SK-N-SH (cell line): ENCODE measurements at regions of chr1 and their contacts with region 1.

Region 1: DNA sequence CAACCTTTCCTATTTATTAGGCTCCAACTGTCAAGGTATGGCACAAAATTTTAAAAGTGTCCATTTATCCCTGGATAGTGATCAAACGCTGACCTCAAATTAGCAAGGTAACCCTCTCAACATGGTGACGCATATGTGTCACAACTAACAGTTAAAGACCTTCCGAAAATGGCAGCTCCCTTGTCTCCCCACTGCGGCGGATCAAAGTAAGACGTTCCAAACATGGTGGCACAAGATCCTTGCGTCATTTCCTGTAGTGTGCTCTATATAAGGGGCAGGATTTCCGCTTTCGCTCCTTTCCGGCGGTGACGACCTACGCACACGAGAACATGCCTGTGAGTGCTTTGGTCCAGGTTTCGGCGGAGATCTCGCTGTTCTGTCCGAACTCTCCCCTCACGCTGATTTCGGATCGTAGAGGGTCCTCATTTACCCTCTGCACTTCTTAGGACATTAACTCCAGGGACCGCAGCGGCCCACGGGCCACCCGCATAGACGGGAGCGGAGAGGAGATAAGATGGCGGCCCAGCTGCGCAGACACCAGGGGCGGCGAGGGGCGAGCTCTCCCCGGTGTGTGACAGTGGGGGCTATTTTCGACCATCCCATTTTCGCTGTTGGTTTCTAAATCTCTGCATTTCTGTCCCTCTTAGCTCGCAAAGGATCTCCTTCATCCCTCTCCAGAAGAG is at the start of gene RPS27:
- DNase-seq: peak; percentile 90
- H3K4me3 ChIP-seq: peak within 1 kb of the TSS; percentile 82 to 85
- H3K27ac ChIP-seq: peak within 1 kb of the TSS; percentile 79 to 92
- H3K4me1 ChIP-seq: peaks cover 19 to 21% of the 10 kb centered on the region in 2 experiments; a peak in 3 of 4 replicates
- H3K27me3 ChIP-seq: no peaks in the 10 kb centered on the region
- CTCF ChIP-seq: no peak
- EP300 ChIP-seq: no peak
- RAD21 ChIP-seq: no peak
- polyA plus RNA-seq, gene RPS27: 7,060 and 7,825 TPM in 2 replicates

Region 2: GRCh38 chr1:153677718-153678505 is 312.7 kb before region 1 on chr1:
- CTCF ChIA-PET with region 1: interaction called, 11 read pairs
- POLR2A ChIA-PET with region 1: interaction called, 6 read pairs
- DNase-seq: peak; percentile 86
- H3K4me3 ChIP-seq: peak overlapping the region; percentile 34 to 44
- H3K27ac ChIP-seq: no peak overlapping the region
- H3K4me1 ChIP-seq: peaks cover 0 to 15% of the 10 kb centered on the region in 2 experiments; a peak in 1 of 4 replicates
- H3K27me3 ChIP-seq: peaks cover 30% of the 10 kb centered on the region
- CTCF ChIP-seq: peak; percentile 96
- EP300 ChIP-seq: no peak
- RAD21 ChIP-seq: peak; percentile 90

Region 3: DNA sequence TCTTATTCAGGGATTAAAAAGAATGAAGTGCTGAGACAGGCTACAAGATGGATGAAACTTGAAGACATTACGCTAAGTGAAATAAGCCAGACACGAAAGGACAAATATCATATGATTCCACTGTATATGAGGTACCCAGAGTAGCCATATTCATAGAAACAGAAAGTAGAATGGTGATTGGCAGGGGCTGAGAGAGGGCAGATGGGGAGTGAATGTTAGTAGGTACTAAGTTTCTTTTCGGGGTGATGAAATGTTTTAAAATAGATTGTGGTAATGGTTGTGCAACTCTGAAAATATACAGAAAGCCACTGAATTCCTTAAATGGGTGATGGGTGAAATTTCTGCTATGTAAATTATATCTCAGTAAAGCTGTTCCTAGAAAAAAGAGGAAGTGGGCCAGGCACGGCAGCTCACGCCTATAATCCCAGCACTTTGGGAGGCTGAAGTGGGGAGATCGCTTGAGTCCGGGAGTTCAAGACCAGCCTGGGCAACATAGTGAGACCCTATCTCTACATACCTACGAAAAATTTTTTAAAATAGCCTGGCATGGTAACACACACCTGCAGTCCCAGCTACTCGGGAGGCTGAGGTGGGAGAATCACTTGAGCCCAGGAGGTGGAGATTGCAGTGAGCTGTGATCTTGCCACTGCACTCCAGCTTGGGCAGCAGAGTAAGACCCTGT is 199.5 kb before region 1 on chr1:
- CTCF ChIA-PET with region 1: interaction called, 61 read pairs
- POLR2A ChIA-PET with region 1: interaction called, 3 read pairs
- DNase-seq: no peak
- H3K4me3 ChIP-seq: no peak overlapping the region
- H3K27ac ChIP-seq: no peak overlapping the region
- H3K4me1 ChIP-seq: no peaks in the 10 kb centered on the region; a peak in 1 of 4 replicates
- H3K27me3 ChIP-seq: no peaks in the 10 kb centered on the region
- CTCF ChIP-seq: no peak
- EP300 ChIP-seq: no peak
- RAD21 ChIP-seq: no peak

Region 4: GRCh38 chr1:153816283-153816889 is 174.2 kb before region 1 on chr1:
- CTCF ChIA-PET with region 1: interaction called, 42 read pairs
- POLR2A ChIA-PET with region 1: interaction called, 3 read pairs
- DNase-seq: no peak
- H3K4me3 ChIP-seq: no peak overlapping the region
- H3K27ac ChIP-seq: no peak overlapping the region
- H3K4me1 ChIP-seq: no peaks in the 10 kb centered on the region
- H3K27me3 ChIP-seq: no peaks in the 10 kb centered on the region
- CTCF ChIP-seq: no peak
- EP300 ChIP-seq: no peak
- RAD21 ChIP-seq: no peak

Region 5: GRCh38 chr1:153928791-153929341 is 61.7 kb before region 1 on chr1:
- CTCF ChIA-PET with region 1: interaction called, 10 read pairs
- POLR2A ChIA-PET with region 1: interaction called, 4 read pairs
- DNase-seq: peak; percentile 82
- H3K4me3 ChIP-seq: no peak overlapping the region
- H3K27ac ChIP-seq: peak overlapping the region in 1 of 2 experiments; percentile 88; a peak in 2 of 4 replicates
- H3K4me1 ChIP-seq: peaks cover 5 to 21% of the 10 kb centered on the region in 2 experiments; a peak in 2 of 4 replicates
- H3K27me3 ChIP-seq: no peaks in the 10 kb centered on the region
- CTCF ChIP-seq: no peak
- EP300 ChIP-seq: peak in 1 of 2 experiments; percentile 74; a peak in 1 of 4 replicates
- RAD21 ChIP-seq: no peak

Region 6: DNA sequence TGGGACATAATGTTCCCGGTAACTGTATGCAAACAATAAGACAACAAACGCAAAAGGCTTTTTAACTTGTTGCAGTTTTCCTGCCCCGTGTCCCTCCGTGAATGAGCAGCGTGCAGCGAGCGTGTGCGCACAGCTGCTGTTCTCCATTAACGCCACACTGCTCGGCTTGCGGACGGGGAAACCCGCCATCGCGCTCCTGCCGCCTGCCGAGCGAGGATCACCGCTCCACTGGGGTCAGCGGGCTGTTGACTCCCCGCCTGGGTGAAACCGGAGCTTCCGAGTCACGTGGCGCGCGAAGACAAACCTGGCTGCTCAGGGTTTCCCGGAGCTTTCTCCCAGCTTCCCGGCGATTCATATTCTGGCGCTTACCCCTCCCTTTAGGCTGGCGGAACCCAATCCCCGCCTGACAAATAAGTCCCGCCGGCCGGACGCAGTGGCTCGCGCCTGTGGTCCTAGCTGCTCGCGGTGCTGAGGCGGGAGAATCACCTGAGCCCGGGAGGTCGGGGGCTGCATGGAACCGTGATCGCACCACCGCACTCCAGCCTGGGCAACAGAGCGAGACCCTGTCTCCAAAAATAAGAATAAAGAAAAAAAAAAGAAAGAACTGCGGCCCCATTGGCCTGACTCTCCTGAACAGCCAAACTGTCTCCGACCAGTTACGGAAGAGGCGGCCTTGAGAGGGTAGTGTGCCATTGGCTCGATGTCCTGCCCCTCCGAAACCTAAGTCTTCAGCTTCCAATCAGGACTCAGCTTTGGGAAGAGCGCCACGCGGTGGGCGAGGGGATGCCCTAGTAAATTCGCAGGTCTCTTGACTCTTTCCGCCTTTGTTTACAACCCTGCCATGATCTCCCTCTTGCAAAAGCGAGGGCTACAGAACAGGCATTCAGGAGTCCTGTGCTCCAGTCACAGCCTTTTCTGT is 23.3 kb before region 1 on chr1 and contains the start of gene CREB3L4:
- CTCF ChIA-PET with region 1: interaction called, 68 read pairs
- POLR2A ChIA-PET with region 1: interaction called, 35 read pairs
- DNase-seq: peak; percentile 87
- H3K4me3 ChIP-seq: peak within 1 kb of the TSS; percentile 61 to 85
- H3K27ac ChIP-seq: peak within 1 kb of the TSS; percentile 77 to 87
- H3K4me1 ChIP-seq: peaks cover 0 to 26% of the 10 kb centered on the region in 2 experiments; a peak in 2 of 4 replicates
- H3K27me3 ChIP-seq: no peaks in the 10 kb centered on the region
- CTCF ChIP-seq: peak; percentile 49
- EP300 ChIP-seq: 0 out of 4 replicates have a peak, but pooled peaks of 1 of the 2 experiments have one; percentile 6
- RAD21 ChIP-seq: peak; percentile 32; the same call in 1 of the 2 replicates
- polyA plus RNA-seq, gene CREB3L4: 12.8 and 16.6 TPM in 2 replicates